PC-9 (cell line): ENCODE measurements at regions of chr3 and their contacts with region 1.

Region 1: DNA sequence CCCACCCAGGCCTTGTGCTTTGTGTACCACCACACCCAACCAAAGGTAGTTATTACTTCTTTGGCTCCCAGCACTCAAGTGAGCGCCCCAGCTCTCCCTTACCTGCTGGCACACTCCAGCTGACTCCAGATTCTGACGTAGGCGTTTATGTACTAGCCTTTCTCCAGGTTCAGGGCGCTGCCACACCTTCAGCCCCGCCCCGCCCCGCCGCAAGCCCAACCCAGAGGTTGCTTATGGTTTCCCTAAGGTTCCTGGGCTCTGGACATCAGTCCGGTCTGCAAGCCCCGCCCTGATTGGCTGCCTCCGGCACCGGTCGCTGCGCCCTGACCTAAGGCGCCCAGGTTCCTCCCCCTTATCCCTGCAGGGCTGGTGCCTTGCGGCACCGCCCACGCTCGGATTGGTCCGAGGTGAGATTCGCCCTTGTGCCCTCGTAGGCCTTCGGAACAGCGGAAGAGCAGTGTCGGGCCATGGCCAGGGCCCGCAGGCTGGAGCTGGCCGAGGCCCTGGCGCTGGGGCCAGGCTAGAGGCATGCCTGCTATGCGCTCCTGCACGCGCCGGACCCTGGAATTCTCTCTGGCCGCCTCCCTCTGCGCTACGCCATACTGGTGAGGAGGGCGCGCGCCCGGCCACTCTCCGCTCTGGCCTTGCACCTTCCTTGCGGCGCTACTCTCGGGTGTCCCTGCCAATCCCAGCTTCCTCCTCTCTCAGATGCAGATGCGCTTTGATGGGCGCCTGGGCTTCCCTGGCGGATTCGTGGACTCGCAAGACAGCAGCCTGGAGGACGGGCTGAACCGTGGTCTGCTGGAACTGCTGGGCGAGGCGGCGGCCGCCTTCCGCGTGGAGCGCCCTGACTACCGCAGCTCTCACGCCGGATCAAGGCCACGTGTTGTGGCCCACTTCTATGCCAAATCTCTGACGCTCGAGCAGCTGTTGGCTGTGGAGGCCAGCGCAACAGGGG is 19.8 kb upstream of the NUDT16 start:
- DNase-seq: peak; percentile 88 to 99
- H3K4me3 ChIP-seq: peak overlapping the region; percentile 58
- H3K27ac ChIP-seq: no peak overlapping the region
- H3K4me1 ChIP-seq: peaks cover 25% of the 10 kb centered on the region
- H3K27me3 ChIP-seq: no peaks in the 10 kb centered on the region
- CTCF ChIP-seq: no peak

Region 2: DNA sequence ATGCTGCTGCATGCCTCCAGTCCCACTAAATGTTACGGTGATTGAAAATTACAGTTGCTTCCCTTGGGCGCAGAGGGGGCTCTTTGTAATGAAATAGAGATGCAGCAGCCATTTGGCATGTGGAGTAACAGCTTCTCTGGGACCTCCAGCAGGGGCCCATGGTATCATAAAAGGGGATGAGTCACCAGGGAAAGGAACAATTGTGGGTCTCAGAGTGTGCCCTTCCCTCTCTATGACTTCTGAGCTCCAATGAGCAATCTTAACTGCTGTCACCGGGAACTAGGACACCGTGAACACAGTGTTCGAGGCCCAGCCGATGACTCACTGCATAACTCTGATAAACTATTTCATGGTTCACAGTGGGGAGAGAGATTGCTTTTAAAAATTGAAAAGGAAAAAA is 144.9 kb before region 1 on chr3:
- CTCF ChIA-PET with region 1: no interaction called
- POLR2A ChIA-PET with region 1: interaction called, 5 read pairs
- intact Hi-C with region 1: loop called (anchors 2 kb)
- DNase-seq: peak; percentile 47 to 86
- H3K4me3 ChIP-seq: no peak overlapping the region
- H3K27ac ChIP-seq: peak overlapping the region; percentile 85
- H3K4me1 ChIP-seq: peaks cover 25% of the 10 kb centered on the region
- H3K27me3 ChIP-seq: no peaks in the 10 kb centered on the region
- CTCF ChIP-seq: no peak

Region 3: DNA sequence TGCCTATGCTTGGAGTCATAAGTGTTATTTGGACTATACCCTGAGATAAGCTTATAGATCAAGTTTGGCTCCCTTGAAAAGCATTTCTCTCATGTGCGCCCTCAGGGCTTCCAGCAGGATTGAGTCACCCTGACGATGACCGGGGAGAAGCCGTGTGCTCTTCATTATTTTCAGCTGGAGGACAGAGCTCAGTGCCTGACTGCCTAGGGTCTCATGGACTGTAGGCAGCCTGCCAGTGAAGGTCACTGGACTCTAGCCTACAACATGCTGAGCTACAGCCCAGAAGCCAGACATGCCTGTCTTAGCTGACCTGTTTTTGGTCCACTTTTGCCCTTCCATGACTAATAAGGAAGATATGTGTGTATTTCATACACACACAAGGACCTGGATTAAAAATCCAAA is 11.8 kb before region 1 on chr3:
- CTCF ChIA-PET with region 1: no interaction called
- POLR2A ChIA-PET with region 1: interaction called, 4 read pairs
- intact Hi-C with region 1: loop called (anchors 1 kb)
- DNase-seq: peak; percentile 82 to 89
- H3K4me3 ChIP-seq: no peak overlapping the region
- H3K27ac ChIP-seq: peak overlapping the region; percentile 91
- H3K4me1 ChIP-seq: peaks cover 60% of the 10 kb centered on the region
- H3K27me3 ChIP-seq: no peaks in the 10 kb centered on the region
- CTCF ChIP-seq: no peak

Region 4: GRCh38 chr3:131381444-131382291 is 19.9 kb after region 1 on chr3 and contains the start of gene NUDT16:
- CTCF ChIA-PET with region 1: no interaction called
- POLR2A ChIA-PET with region 1: interaction called, 7 read pairs
- intact Hi-C with region 1: loop called (anchors 1 kb)
- DNase-seq: peak; percentile 97 to 100
- H3K4me3 ChIP-seq: peak within 1 kb of the TSS; percentile 62
- H3K27ac ChIP-seq: no peak within 1 kb of the TSS
- H3K4me1 ChIP-seq: 0 out of 2 replicates have a peak, but pooled peaks cover 5% of the 10 kb centered on the region
- H3K27me3 ChIP-seq: no peaks in the 10 kb centered on the region
- CTCF ChIP-seq: no peak
- total RNA-seq, gene NUDT16: 19.4 and 19.5 TPM in 2 replicates

Region 5: GRCh38 chr3:131402391-131403039 is 40.8 kb after region 1 on chr3:
- CTCF ChIA-PET with region 1: no interaction called
- POLR2A ChIA-PET with region 1: no interaction called
- intact Hi-C with region 1: loop called (anchors 2 kb)
- DNase-seq: peak; percentile 25 to 83
- H3K4me3 ChIP-seq: no peak overlapping the region
- H3K27ac ChIP-seq: peak overlapping the region; percentile 27; the same call in 1 of the 2 replicates
- H3K4me1 ChIP-seq: peaks cover 18% of the 10 kb centered on the region
- H3K27me3 ChIP-seq: no peaks in the 10 kb centered on the region
- CTCF ChIP-seq: no peak